GM10248 (cell line): ENCODE measurements at regions of chr10 and their contacts with region 1.

Region 1: GRCh38 chr10:15901889-15902288 is 41.6 kb upstream of the MINDY3 start:
- DNase-seq: no peak
- CTCF ChIP-seq: no peak

Region 2: DNA sequence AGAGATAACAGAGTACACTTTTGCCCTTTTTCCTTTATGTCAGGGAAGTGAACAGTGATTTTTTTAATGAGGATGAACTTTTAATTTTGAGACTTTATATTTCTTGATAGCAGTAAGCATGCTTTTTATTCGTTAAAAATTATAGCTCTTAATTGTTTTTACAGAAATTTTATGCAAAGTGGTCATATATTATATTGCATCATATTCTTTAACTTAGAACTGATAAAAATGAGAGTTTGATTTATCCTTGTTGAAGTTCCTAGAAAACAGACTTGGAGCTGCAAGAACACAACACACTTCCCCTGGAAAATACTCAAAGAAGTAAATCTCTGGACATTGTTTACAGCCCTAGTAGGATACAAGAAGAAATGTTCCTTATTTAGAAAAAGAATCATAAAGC is 20.3 kb before region 1 on chr10:
- CTCF ChIA-PET with region 1: interaction called, 14 read pairs
- POLR2A ChIA-PET with region 1: no interaction called
- DNase-seq: no peak
- CTCF ChIP-seq: no peak

Region 3: DNA sequence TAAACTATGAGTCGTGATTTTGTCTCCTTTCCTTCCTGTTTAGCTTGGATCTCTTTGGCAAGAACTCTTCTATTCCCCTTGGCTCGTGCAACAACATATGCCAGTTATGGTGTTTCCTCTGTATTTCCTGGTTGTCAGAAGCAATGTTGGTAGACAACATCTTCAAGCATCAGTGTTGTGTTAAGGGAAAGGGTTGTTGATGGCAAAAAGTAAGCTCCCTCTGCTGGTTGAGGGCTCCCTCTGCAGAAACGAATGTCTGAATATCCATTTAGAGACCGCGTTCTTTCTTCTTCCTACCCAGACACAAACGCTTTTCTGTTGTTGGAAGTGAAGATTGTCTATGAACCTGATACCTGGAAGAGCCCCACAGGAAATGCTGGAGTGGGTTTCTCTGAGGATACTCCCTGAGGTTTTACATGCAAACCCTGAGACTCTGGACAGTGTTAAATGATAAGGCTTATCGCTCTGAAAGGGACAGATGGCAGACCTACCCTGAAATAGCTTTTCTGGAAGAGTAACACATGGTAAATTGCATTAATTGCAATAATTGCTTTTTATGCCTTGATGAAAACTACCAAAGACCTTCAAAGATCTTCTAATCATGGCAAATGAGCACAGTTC is 643.3 kb after region 1 on chr10:
- CTCF ChIA-PET with region 1: interaction called, 12 read pairs
- POLR2A ChIA-PET with region 1: no interaction called
- DNase-seq: peak; percentile 52
- CTCF ChIP-seq: peak; percentile 73

Region 4: DNA sequence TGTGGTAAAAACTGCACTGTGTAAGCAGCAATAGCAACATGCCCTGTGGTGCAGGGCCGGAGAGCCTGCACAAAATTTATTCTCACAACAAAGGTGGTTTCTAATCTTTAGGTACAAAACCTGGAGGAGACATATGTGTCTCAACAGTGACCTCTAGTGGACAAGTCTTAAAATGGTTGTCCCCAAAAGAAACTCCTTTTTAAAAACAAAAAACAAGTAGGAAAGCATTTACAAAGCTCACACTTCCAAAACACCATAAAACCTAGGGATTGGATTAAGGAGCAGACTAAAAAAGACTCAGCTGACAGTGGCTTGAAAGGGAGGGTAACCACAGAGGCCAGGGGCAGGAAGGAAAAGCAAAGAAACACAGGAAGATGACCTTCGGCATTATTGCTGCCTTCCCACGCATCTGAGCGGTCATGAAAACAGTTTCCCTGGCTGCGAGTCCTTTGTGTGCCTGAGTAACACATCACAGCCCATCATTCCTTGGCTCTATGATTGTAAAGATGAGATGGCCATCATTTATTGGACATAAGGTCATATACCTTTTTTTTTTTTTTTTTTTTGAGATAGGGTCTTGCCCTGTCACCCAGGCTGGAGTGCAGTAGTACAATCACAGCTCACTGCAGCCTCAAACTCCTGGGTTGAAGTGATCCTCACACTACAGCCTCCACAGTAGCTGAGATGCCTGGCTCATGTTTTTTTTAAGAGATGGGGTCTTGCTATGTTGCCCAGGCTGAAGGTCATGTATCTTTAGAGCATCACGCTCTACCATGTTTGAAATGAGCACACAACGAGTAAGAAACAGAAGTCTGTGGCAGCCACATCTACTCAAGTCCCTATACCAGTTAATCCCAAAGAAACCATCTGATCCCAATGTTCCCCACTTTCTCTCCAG is 875.8 kb after region 1 on chr10:
- CTCF ChIA-PET with region 1: interaction called, 16 read pairs
- POLR2A ChIA-PET with region 1: no interaction called
- DNase-seq: peak; percentile 68
- CTCF ChIP-seq: peak; percentile 65

Region 5: GRCh38 chr10:16809074-16809718 is 907.3 kb after region 1 on chr10:
- CTCF ChIA-PET with region 1: interaction called, 15 read pairs
- POLR2A ChIA-PET with region 1: no interaction called
- DNase-seq: peak; percentile 71
- CTCF ChIP-seq: peak; percentile 62